ENCODE measurements at regions of chrX and their contacts with region 1.

Region 1: GRCh38 chrX:123960042-123960611 is 1.4 kb upstream of the STAG2 start:
- DNase-seq: peak; percentile 90
- H3K4me3 Mint-ChIP-seq: peak overlapping the region; percentile 97
- H3K27ac Mint-ChIP-seq: peak overlapping the region; percentile 100
- H3K4me1 Mint-ChIP-seq: peaks cover 9% of the 10 kb centered on the region
- H3K27me3 Mint-ChIP-seq: no peaks in the 10 kb centered on the region
- CTCF ChIP-seq: peak; percentile 95

Region 2: GRCh38 chrX:123665197-123665596 is 294.9 kb before region 1 on chrX:
- CTCF ChIA-PET with region 1: no interaction called
- intact Hi-C with region 1: no loop called
- DNase-seq: peak; percentile 4
- H3K4me3 Mint-ChIP-seq: no peak overlapping the region
- H3K27ac Mint-ChIP-seq: no peak overlapping the region
- H3K4me1 Mint-ChIP-seq: no peaks in the 10 kb centered on the region
- H3K27me3 Mint-ChIP-seq: no peaks in the 10 kb centered on the region
- CTCF ChIP-seq: no peak

Region 3: DNA sequence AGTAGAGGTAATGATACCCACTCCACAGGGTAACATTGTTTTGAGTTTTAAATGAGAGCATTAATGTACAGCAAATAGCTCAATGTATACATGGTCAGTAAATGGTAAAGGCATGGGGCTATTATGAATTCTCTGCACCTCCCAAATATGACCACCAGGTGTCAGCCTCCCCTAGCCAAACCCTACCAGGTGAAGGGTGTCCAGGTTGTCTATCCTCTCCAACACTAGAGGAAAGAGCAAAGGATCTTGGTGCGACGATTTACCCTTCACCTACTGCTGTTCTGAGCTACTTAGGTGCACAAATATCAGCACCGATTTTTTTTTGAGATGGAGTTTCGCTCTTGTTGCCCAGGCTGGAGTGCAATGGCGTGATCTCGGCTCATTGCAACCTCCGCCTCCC is 126.7 kb before region 1 on chrX:
- CTCF ChIA-PET with region 1: interaction called, 4 read pairs
- intact Hi-C with region 1: loop called (anchors 5 kb)
- DNase-seq: peak; percentile 70
- H3K4me3 Mint-ChIP-seq: peak overlapping the region; percentile 21
- H3K27ac Mint-ChIP-seq: no peak overlapping the region
- H3K4me1 Mint-ChIP-seq: peaks cover 45% of the 10 kb centered on the region
- H3K27me3 Mint-ChIP-seq: no peaks in the 10 kb centered on the region
- CTCF ChIP-seq: peak; percentile 52

Region 4: GRCh38 chrX:123918106-123918729 is 41.9 kb before region 1 on chrX:
- CTCF ChIA-PET with region 1: no interaction called
- intact Hi-C with region 1: loop called (anchors 5 kb)
- DNase-seq: no peak
- H3K4me3 Mint-ChIP-seq: no peak overlapping the region
- H3K27ac Mint-ChIP-seq: peak overlapping the region; percentile 10
- H3K4me1 Mint-ChIP-seq: peaks cover 22% of the 10 kb centered on the region
- H3K27me3 Mint-ChIP-seq: no peaks in the 10 kb centered on the region
- CTCF ChIP-seq: no peak

Region 5: DNA sequence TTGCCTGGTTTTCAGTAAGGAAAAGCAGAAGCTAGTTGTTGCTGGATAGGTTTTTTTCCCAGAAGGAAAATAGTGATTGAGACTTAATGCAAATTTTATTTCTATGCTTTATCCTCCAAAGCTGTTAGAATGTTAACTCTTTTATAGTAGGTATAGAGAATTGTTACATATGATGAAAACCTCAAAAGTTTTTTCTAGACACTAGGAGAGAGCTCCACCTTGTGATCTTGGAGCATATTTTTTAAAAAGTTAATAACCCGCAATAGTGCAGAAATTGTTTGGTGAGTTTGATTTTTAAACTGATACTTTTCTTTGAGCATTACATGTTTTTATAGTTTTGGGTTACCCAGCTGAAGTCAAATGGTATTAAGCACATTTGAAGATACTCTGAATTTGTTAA is 57.9 kb after region 1 on chrX:
- CTCF ChIA-PET with region 1: no interaction called
- intact Hi-C with region 1: loop called (anchors 5 kb)
- DNase-seq: no peak
- H3K4me3 Mint-ChIP-seq: no peak overlapping the region
- H3K27ac Mint-ChIP-seq: no peak overlapping the region
- H3K4me1 Mint-ChIP-seq: peaks cover 7% of the 10 kb centered on the region
- H3K27me3 Mint-ChIP-seq: no peaks in the 10 kb centered on the region
- CTCF ChIP-seq: no peak

Region 6: GRCh38 chrX:124211312-124211942 is 251.3 kb after region 1 on chrX:
- CTCF ChIA-PET with region 1: no interaction called
- intact Hi-C with region 1: no loop called
- DNase-seq: peak; percentile 15
- H3K4me3 Mint-ChIP-seq: no peak overlapping the region
- H3K27ac Mint-ChIP-seq: no peak overlapping the region
- H3K4me1 Mint-ChIP-seq: no peaks in the 10 kb centered on the region
- H3K27me3 Mint-ChIP-seq: peaks cover 18% of the 10 kb centered on the region
- CTCF ChIP-seq: peak; percentile 29